Lower leg skin (tissue), 4 donors: ENCODE measurements at regions of chr20 and their contacts with region 1.

Region 1: DNA sequence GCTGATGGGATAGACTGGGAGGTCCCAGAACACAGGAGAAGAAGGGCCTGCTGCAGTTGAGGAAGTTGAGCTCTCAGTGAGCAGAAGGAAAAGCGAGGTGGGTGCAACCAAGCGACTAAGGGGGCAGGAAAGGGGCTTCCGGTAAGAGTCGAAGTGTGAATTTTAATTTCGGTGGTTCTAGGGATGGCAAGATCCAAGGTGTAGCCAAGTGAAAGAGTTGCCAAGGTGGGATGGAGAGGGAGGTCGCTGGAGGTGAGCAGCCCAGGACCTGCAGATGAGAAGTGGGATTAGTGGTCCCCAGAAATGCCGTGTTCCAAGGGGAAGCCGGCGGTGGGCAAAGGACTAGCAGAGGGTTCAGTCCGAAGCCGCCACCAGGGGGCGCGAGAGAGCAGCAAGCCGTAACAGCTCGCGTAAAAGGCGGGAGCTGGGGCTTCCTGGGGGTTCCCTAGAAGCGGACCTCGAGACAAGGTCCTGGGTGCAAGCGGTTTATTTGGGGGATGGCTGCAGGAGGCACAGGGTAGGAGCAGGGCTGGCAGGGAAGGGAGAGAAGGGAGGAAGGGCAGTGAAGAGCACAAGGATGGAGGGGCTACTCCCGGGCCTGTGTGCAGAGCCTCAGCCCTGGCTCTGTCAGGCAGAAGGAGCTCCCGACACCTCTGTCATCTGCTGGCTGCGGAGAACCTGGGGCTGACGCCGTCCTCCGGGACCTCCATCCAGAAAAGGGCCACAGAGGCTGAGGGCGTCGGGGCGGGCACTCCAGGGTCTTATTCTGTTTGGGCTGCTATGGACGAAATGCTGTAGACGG is 103.6 kb downstream of the PAX1 start:
- DNase-seq: no peak
- H3K4me3 ChIP-seq: no peak overlapping the region
- CTCF ChIP-seq: no peak
- POLR2A ChIP-seq: no peak

Region 2: DNA sequence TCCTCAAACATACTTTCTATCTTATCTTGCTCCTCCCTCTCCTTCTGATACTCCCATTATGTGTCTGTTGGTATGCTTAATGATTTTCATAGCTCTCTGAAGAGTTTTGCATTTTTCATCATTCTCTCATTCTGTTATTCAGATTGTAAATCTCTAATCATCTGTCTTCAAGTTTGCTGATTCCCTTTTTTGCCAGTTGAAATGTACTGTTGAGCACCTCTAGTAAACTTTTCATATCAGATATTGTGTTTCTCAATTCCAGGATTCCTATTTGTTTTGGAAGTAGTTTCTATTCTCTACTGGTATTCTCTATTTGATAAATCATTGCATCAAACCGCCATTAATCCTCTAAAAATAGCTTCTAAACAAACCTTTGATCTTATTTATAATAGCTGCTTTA is 284.1 kb after region 1 on chr20:
- intact Hi-C with region 1: no loop called
- DNase-seq: no peak
- H3K4me3 ChIP-seq: no peak overlapping the region
- CTCF ChIP-seq: no peak
- POLR2A ChIP-seq: no peak

Region 3: DNA sequence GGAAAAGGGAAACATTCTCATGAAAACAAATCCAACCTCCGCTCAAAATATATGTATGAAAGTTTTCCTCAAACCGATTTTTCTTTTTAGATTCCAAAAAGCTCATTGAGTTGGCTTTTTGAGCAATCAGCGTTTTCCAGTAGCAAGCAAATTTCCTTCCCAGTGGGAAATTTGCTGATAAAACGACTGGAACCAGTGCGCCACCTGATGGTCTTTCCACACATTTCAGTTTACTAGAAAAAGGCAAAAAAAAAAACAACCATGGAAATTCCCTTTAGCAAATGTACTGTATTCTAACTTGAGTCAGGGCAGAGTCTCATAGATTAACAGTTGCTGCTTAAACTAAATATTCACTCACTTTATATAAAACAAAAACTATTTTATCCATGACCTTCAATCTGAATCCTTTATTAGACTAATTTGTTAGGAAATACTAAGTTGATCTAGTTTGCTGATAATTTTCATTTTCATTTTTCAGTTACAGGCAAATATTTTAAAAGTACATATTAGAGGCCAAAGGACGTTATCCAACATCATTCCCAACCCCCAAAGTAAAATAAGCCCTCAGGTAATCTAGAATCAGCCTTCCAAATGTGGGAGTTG is 503.8 kb after region 1 on chr20:
- intact Hi-C with region 1: loop called (anchors 10 kb)
- DNase-seq: no peak
- H3K4me3 ChIP-seq: no peak overlapping the region
- CTCF ChIP-seq: no peak
- POLR2A ChIP-seq: no peak

Region 4: DNA sequence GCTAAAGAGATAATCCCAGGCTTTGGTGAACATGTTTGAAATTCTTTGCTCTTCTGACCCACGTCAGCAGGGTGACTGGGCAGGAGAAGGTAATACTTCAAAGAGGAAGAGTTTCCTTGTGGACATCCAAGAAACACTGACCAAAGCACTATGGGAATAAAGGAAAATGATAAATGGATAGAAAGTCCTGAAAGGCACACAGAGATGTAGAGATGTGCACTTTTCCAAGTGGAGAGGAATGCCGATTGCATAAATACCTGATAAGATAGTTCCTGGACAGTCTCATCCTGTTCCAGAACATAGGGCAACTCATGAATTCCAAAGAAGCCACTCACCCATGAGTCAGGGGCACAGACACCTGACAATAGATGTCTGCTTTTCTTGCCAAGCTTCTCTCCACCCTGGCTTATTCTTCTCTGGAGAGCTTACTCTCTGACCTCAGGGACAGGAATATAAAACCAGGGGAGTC is 966.6 kb after region 1 on chr20:
- intact Hi-C with region 1: no loop called
- DNase-seq: no peak
- H3K4me3 ChIP-seq: no peak overlapping the region
- CTCF ChIP-seq: no peak
- POLR2A ChIP-seq: no peak

Region 5: GRCh38 chr20:23245553-23246181 is 1436.6 kb after region 1 on chr20:
- intact Hi-C with region 1: no loop called
- DNase-seq: peak; percentile 30 to 92
- H3K4me3 ChIP-seq: no peak overlapping the region
- CTCF ChIP-seq: peak in 1 of 3 donors; percentile 9
- POLR2A ChIP-seq: no peak

Region 6: GRCh38 chr20:23265226-23265625 is 1456.2 kb after region 1 on chr20:
- intact Hi-C with region 1: loop called (anchors 10 kb)
- DNase-seq: peak in 1 of 2 donors; percentile 80
- H3K4me3 ChIP-seq: no peak overlapping the region
- CTCF ChIP-seq: no peak
- POLR2A ChIP-seq: no peak